Calu3 (cell line): ENCODE measurements at regions of chr17 and their contacts with region 1.

Region 1: DNA sequence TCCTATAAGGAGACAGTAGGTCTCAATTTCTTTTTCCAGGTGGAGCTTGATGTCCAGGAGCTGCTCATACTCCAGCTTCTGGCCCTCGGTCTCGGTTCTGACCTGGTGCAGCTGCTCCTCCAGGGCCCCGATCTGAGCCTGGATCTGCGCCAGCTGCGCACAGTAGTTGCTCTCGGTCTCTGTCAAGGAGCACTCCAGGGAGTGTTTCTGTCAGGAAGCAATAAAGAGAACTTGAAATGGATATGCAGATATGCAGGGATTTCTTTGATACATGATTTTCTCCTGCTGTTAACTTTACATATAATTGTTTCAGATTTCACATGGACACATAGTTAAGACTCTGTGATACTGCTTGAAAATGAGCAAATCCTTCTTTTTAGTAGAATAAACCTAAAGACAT is 4.7 kb downstream of the KRT25 start:
- DNase-seq: no peak
- H3K4me3 Mint-ChIP-seq: no peak overlapping the region
- H3K27ac Mint-ChIP-seq: no peak overlapping the region
- H3K4me1 Mint-ChIP-seq: no peaks in the 10 kb centered on the region
- H3K27me3 Mint-ChIP-seq: peaks cover 77% of the 10 kb centered on the region
- CTCF ChIP-seq: no peak

Region 2: DNA sequence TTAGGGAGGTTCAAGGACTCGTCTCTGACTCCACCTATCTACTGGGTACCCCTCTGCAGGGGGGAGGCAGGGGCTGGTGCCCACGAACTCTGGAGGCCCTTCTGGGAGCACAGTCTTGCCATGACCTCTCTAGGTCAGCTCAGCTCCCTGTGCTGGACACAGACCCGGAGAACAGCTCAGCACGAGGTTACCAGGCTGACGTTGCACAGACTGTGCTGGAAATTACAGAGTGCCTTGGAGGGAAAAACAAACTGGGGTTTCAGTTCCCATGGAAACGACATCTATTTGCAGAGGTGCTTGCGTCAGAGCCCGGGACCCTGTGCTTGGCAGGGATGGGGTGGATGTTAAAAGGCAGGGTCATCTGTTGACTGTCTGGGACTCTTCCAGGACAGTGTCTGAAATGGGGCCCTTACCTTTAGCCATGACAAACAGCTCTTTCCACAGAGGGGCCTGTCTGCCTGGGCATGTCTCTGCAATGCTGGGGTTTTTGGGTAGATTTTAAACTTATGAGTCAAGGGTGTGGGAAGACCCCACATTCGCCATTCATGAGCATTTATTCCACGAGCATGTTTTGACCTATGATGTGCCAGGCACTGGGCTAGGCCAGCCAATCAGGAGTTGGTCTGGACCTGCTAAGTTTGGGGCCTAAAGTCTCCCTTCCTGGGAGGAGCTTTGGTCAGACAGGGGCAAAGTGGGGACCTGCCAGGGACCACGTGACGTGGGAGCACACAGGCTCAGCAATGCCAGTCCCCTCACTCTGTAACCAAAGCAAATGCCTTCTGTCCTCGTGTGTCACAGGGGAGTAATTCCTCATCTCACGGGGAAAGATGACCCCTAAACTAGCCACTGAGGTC is 207.6 kb before region 1 on chr17:
- CTCF ChIA-PET with region 1: interaction called, 10 read pairs
- intact Hi-C with region 1: no loop called
- DNase-seq: no peak
- H3K4me3 Mint-ChIP-seq: no peak overlapping the region
- H3K27ac Mint-ChIP-seq: no peak overlapping the region
- H3K4me1 Mint-ChIP-seq: no peaks in the 10 kb centered on the region
- H3K27me3 Mint-ChIP-seq: peaks cover 50% of the 10 kb centered on the region
- CTCF ChIP-seq: no peak

Region 3: GRCh38 chr17:40726919-40727318 is 23.5 kb before region 1 on chr17:
- CTCF ChIA-PET with region 1: interaction called, 9 read pairs
- intact Hi-C with region 1: loop called (anchors 2 kb)
- DNase-seq: peak; percentile 45
- H3K4me3 Mint-ChIP-seq: no peak overlapping the region
- H3K27ac Mint-ChIP-seq: no peak overlapping the region
- H3K4me1 Mint-ChIP-seq: peaks cover 19% of the 10 kb centered on the region
- H3K27me3 Mint-ChIP-seq: peaks cover 54% of the 10 kb centered on the region
- CTCF ChIP-seq: no peak

Region 4: GRCh38 chr17:40735016-40735415 is 15.4 kb before region 1 on chr17:
- CTCF ChIA-PET with region 1: interaction called, 116 read pairs
- intact Hi-C with region 1: loop called (anchors 2 kb)
- DNase-seq: no peak
- H3K4me3 Mint-ChIP-seq: no peak overlapping the region
- H3K27ac Mint-ChIP-seq: no peak overlapping the region
- H3K4me1 Mint-ChIP-seq: no peaks in the 10 kb centered on the region
- H3K27me3 Mint-ChIP-seq: peaks cover 88% of the 10 kb centered on the region
- CTCF ChIP-seq: no peak

Region 5: GRCh38 chr17:40763752-40764151 is 13.4 kb after region 1 on chr17:
- CTCF ChIA-PET with region 1: interaction called, 11 read pairs
- intact Hi-C with region 1: no loop called
- DNase-seq: no peak
- H3K4me3 Mint-ChIP-seq: no peak overlapping the region
- H3K27ac Mint-ChIP-seq: no peak overlapping the region
- H3K4me1 Mint-ChIP-seq: no peaks in the 10 kb centered on the region
- H3K27me3 Mint-ChIP-seq: peaks cover 52% of the 10 kb centered on the region
- CTCF ChIP-seq: no peak

Region 6: DNA sequence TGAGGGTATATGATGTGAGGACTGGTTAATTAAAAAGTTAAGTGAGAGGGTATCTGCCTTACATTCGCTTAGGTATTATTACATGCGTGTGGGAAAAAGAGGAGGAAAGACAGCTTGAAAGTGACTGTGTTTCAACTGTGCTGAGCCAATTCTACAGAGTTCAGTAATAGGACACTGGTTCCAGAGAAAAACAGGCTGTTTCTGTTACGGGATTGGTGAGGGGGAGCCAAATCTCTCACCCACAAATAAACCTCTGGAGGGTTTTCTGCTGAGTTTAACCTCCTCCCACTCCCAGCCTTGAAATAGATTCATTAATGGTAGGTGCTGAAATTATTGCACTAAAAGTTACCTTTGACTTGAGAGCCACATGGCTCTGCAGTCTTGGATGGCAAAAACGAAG is 25.6 kb after region 1 on chr17:
- CTCF ChIA-PET with region 1: interaction called, 12 read pairs
- intact Hi-C with region 1: no loop called
- DNase-seq: no peak
- H3K4me3 Mint-ChIP-seq: no peak overlapping the region
- H3K27ac Mint-ChIP-seq: no peak overlapping the region
- H3K4me1 Mint-ChIP-seq: no peaks in the 10 kb centered on the region
- H3K27me3 Mint-ChIP-seq: peaks cover 83% of the 10 kb centered on the region
- CTCF ChIP-seq: no peak

Region 7: DNA sequence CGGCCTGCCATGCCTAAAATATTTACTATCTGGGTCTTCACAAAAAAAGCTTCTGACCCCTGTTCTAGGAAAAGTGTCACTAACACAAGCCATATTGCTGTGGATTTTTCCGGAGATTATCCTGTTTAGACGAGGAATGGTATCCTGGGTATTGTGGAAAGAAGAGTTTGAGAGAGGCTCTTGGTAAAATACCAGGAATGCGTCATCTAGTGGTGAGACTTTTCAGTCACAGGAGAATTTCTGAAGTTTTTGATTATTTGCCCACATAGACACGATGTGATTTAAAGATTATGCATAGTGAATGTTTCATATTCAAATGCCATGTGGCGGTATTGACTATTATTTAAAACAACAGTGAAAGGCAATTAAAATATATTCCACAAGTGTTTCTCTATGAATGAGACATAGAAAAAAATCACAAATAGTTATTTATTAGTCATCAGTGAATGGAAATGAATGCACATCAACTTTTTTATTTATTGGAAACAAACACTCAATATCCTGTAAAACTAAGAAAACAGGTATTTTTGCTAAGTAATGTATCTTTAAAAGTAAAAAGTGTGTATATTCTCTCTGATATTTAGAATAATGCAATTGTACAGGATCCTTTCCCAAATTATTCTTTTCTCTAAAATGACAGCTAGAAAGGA is 41.5 kb after region 1 on chr17:
- CTCF ChIA-PET with region 1: no interaction called
- intact Hi-C with region 1: no loop called
- DNase-seq: peak; percentile 59
- H3K4me3 Mint-ChIP-seq: no peak overlapping the region
- H3K27ac Mint-ChIP-seq: no peak overlapping the region
- H3K4me1 Mint-ChIP-seq: no peaks in the 10 kb centered on the region
- H3K27me3 Mint-ChIP-seq: peaks cover 40% of the 10 kb centered on the region
- CTCF ChIP-seq: peak; percentile 100